T-cell (primary cell): ENCODE measurements at regions of chr18 and their contacts with region 1.

Region 1: GRCh38 chr18:58148954-58149471 is 105.0 kb downstream of the NEDD4L start:
- DNase-seq: no peak
- ATAC-seq: no peak
- H3K4me3 ChIP-seq: no peak overlapping the region
- H3K4me3 Mint-ChIP-seq: no peak overlapping the region
- H3K27ac ChIP-seq: no peak overlapping the region
- H3K27ac Mint-ChIP-seq: no peak overlapping the region
- H3K4me1 ChIP-seq: no peaks in the 10 kb centered on the region
- H3K4me1 Mint-ChIP-seq: no peaks in the 10 kb centered on the region
- H3K27me3 ChIP-seq: peaks cover 0 to 6% of the 10 kb centered on the region in 2 experiments
- H3K27me3 Mint-ChIP-seq: peaks cover 6 to 11% of the 10 kb centered on the region in 2 donors

Region 2: DNA sequence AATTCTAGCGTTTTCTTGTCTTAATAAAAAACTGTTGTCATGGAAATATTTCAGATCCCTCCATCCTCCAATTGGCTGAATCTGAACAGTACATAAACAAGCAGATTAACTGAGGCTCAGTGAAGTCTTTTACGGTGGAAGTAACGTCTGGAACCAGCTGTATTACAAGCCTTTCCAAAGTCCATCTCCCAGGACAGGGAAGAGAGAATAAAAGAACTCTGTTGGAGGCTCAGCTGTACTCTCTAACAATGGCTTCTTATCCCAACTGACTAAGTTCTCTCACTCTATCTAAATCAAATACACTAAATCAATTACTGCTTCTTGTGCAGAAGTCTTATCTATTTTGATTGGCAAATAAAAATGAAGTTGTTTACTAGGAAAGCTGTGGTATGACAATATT is 124.9 kb before region 1 on chr18:
- CTCF ChIA-PET with region 1: interaction called in 1 of 2 experiments, 13 read pairs
- POLR2A ChIA-PET with region 1: no interaction called
- DNase-seq: no peak
- ATAC-seq: no peak
- H3K4me3 ChIP-seq: no peak overlapping the region
- H3K4me3 Mint-ChIP-seq: no peak overlapping the region
- H3K27ac ChIP-seq: no peak overlapping the region
- H3K27ac Mint-ChIP-seq: no peak overlapping the region
- H3K4me1 ChIP-seq: no peaks in the 10 kb centered on the region
- H3K4me1 Mint-ChIP-seq: no peaks in the 10 kb centered on the region
- H3K27me3 ChIP-seq: peaks cover 0 to 2% of the 10 kb centered on the region in 2 experiments
- H3K27me3 Mint-ChIP-seq: peaks cover 0 to 7% of the 10 kb centered on the region in 2 donors

Region 3: GRCh38 chr18:58117786-58118403 is 31.1 kb before region 1 on chr18:
- CTCF ChIA-PET with region 1: no interaction called
- POLR2A ChIA-PET with region 1: no interaction called
- DNase-seq: no peak
- ATAC-seq: no peak
- H3K4me3 ChIP-seq: no peak overlapping the region
- H3K4me3 Mint-ChIP-seq: no peak overlapping the region
- H3K27ac ChIP-seq: no peak overlapping the region
- H3K27ac Mint-ChIP-seq: no peak overlapping the region
- H3K4me1 ChIP-seq: no peaks in the 10 kb centered on the region
- H3K4me1 Mint-ChIP-seq: peaks cover 0 to 8% (median 2%) of the 10 kb centered on the region in 3 donors
- H3K27me3 ChIP-seq: peaks cover 0 to 4% of the 10 kb centered on the region in 2 experiments
- H3K27me3 Mint-ChIP-seq: peaks cover 0 to 5% of the 10 kb centered on the region in 2 donors

Region 4: DNA sequence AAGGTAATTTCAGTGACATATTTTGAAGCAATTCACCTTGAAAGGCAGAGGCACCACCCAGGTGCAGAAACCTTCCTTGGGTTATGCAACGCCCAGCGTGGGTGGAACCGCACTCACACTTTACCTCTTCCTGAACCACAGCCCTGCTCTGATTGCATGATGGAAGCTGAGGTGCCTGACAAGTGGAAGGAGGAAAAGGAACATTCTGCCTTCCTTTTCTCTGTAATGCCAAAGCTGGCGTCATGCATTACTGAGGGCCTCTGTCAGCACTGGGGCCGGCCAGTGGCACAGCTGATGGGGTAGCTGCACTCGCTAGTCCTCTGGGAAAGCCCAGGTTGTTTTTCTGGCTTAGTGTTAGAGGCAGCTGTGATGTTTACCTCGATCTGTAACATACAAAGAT is 161.5 kb after region 1 on chr18:
- CTCF ChIA-PET with region 1: no interaction called
- POLR2A ChIA-PET with region 1: no interaction called
- DNase-seq: peak in 33 of 35 experiments; percentile 6 to 72 (median 39)
- ATAC-seq: peak; percentile 74 to 95 (median 86)
- H3K4me3 ChIP-seq: no peak overlapping the region
- H3K4me3 Mint-ChIP-seq: peak overlapping the region in 2 of 3 donors; percentile 42 to 70
- H3K27ac ChIP-seq: peak overlapping the region; percentile 17
- H3K27ac Mint-ChIP-seq: peak overlapping the region; percentile 95 to 96
- H3K4me1 ChIP-seq: peaks cover 40 to 55% of the 10 kb centered on the region in 2 experiments
- H3K4me1 Mint-ChIP-seq: peaks cover 36 to 62% (median 48%) of the 10 kb centered on the region in 3 donors
- H3K27me3 ChIP-seq: peaks cover 0 to 3% of the 10 kb centered on the region in 2 experiments
- H3K27me3 Mint-ChIP-seq: no peaks in the 10 kb centered on the region